Pancreas (tissue), 10 donors: ENCODE measurements at regions of chr14 and their contacts with region 1.

Region 1: GRCh38 chr14:34027990-34028495 is 77.2 kb upstream of the EGLN3 start:
- DNase-seq: no peak
- ATAC-seq: no peak
- H3K4me3 ChIP-seq: no peak overlapping the region
- H3K27ac ChIP-seq: no peak overlapping the region
- H3K4me1 ChIP-seq: peaks cover 0 to 11% (median 0%) of the 10 kb centered on the region in 3 donors
- H3K27me3 ChIP-seq: no peaks in the 10 kb centered on the region
- CTCF ChIP-seq: no peak

Region 2: GRCh38 chr14:33964599-33965317 is 63.3 kb before region 1 on chr14:
- intact Hi-C with region 1: loop called in 1 of 3 experiments (anchors 5 kb)
- DNase-seq: no peak
- ATAC-seq: no peak
- H3K4me3 ChIP-seq: no peak overlapping the region
- H3K27ac ChIP-seq: no peak overlapping the region
- H3K4me1 ChIP-seq: no peaks in the 10 kb centered on the region
- H3K27me3 ChIP-seq: no peaks in the 10 kb centered on the region
- CTCF ChIP-seq: no peak

Region 3: GRCh38 chr14:34087556-34087955 is 59.5 kb after region 1 on chr14:
- intact Hi-C with region 1: no loop called
- DNase-seq: no peak
- ATAC-seq: no peak
- H3K4me3 ChIP-seq: no peak overlapping the region
- H3K27ac ChIP-seq: no peak overlapping the region
- H3K4me1 ChIP-seq: peaks cover 0 to 5% (median 0%) of the 10 kb centered on the region in 3 donors
- H3K27me3 ChIP-seq: no peaks in the 10 kb centered on the region
- CTCF ChIP-seq: no peak

Region 4: GRCh38 chr14:35247777-35248475 is 1219.9 kb after region 1 on chr14:
- intact Hi-C with region 1: no loop called
- DNase-seq: no peak
- ATAC-seq: no peak
- H3K4me3 ChIP-seq: no peak overlapping the region
- H3K27ac ChIP-seq: no peak overlapping the region
- H3K4me1 ChIP-seq: no peaks in the 10 kb centered on the region
- H3K27me3 ChIP-seq: no peaks in the 10 kb centered on the region
- CTCF ChIP-seq: no peak